ENCODE measurements at regions of chr7 and their contacts with region 1.

Region 1: GRCh38 chr7:17758008-17758407 is 182.3 kb downstream of the SNX13 start:
- DNase-seq: no peak
- ATAC-seq: no peak
- H3K4me3 ChIP-seq: no peak overlapping the region
- H3K27ac ChIP-seq: no peak overlapping the region
- H3K4me1 ChIP-seq: no peaks in the 10 kb centered on the region
- H3K27me3 ChIP-seq: no peaks in the 10 kb centered on the region
- CTCF ChIP-seq: no peak

Region 2: GRCh38 chr7:17792075-17792936 is 34.3 kb after region 1 on chr7:
- intact Hi-C with region 1: no loop called
- DNase-seq: no peak
- ATAC-seq: no peak
- H3K4me3 ChIP-seq: no peak overlapping the region
- H3K27ac ChIP-seq: no peak overlapping the region
- H3K4me1 ChIP-seq: no peaks in the 10 kb centered on the region
- H3K27me3 ChIP-seq: no peaks in the 10 kb centered on the region
- CTCF ChIP-seq: no peak

Region 3: DNA sequence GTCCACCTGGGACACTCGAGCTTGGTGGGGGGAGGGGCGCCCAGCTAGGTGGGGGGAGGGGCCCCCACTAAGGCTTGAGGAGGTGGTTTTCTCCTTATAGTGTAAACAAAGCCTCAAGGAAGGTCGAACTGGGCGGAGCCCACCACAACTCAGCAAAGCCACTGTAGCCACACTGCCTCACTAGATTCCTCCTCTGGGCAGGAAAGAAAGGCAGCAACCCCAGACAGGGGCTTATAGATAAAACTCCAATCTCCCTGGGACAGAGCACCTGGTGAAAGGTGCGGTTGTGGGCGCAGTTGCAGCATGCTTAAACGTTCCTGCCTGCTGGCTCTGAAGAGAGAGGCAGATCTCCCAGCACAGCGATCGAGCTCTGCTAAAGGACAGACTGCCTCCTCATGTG is 49.2 kb after region 1 on chr7:
- intact Hi-C with region 1: loop called in 1 of 10 experiments (anchors 5 kb)
- DNase-seq: no peak
- ATAC-seq: no peak
- H3K4me3 ChIP-seq: no peak overlapping the region
- H3K27ac ChIP-seq: no peak overlapping the region
- H3K4me1 ChIP-seq: no peaks in the 10 kb centered on the region
- H3K27me3 ChIP-seq: no peaks in the 10 kb centered on the region
- CTCF ChIP-seq: no peak

Region 4: DNA sequence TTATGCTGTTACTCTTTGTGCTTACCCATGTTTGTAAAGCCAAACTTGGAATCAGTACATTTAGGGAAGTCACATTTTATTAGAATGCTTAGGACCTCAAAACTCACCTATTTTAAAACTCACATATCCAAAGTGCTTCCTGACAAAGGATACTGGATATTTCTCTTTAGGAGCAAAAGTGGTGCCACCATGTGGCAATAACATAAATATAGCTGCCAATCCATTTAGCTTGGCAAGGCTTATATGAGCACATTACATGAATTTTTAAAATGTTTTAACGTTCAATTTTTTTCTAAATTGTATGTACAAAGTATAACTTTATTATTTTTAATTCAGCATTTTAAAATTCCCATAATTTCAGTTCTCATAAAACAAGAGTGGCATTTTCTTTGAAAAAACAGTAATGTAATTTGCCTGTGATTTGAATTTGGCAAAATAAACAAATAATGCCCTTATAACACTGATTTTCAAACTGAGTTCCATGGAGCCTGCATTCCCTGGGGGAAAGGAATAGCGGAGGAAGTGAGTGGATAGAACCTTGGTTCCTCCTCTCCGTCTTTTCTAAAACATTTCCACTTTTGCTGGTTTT is 813.0 kb after region 1 on chr7:
- intact Hi-C with region 1: loop called in 1 of 10 experiments (anchors 5 kb)
- DNase-seq: no peak
- ATAC-seq: peak in 7 of 8 donors; percentile 20 to 57 (median 49)
- H3K4me3 ChIP-seq: no peak overlapping the region
- H3K27ac ChIP-seq: peak overlapping the region in 1 of 10 donors; percentile 35
- H3K4me1 ChIP-seq: peaks cover 0 to 26% (median 13%) of the 10 kb centered on the region in 9 donors
- H3K27me3 ChIP-seq: no peaks in the 10 kb centered on the region
- CTCF ChIP-seq: peak in 8 of 9 donors; percentile 9 to 72 (median 60)